Dorsolateral prefrontal cortex (tissue), 120 donors: ENCODE measurements at regions of chr19 and their contacts with region 1.

Region 1: GRCh38 chr19:29528350-29528945 is 2.7 kb downstream of the VSTM2B start:
- DNase-seq: peak; percentile 76 to 89 (median 84)
- H3K4me3 ChIP-seq: peak overlapping the region; percentile 18 to 78 (median 66)
- H3K27ac ChIP-seq: peak overlapping the region in 57 of 59 donors; percentile 25 to 97 (median 81)
- H3K27me3 ChIP-seq: peaks cover 0 to 61% (median 6%) of the 10 kb centered on the region in 45 donors
- CTCF ChIP-seq: peak; percentile 70 to 98 (median 91)

Region 2: GRCh38 chr19:28878862-28879566 is 649.4 kb before region 1 on chr19:
- intact Hi-C with region 1: loop called in 1 of 2 experiments (anchors 5 kb)
- DNase-seq: peak; percentile 60 to 87 (median 67)
- H3K4me3 ChIP-seq: no peak overlapping the region
- H3K27ac ChIP-seq: no peak overlapping the region
- H3K27me3 ChIP-seq: no peaks in the 10 kb centered on the region
- CTCF ChIP-seq: peak; percentile 64 to 97 (median 81)

Region 3: DNA sequence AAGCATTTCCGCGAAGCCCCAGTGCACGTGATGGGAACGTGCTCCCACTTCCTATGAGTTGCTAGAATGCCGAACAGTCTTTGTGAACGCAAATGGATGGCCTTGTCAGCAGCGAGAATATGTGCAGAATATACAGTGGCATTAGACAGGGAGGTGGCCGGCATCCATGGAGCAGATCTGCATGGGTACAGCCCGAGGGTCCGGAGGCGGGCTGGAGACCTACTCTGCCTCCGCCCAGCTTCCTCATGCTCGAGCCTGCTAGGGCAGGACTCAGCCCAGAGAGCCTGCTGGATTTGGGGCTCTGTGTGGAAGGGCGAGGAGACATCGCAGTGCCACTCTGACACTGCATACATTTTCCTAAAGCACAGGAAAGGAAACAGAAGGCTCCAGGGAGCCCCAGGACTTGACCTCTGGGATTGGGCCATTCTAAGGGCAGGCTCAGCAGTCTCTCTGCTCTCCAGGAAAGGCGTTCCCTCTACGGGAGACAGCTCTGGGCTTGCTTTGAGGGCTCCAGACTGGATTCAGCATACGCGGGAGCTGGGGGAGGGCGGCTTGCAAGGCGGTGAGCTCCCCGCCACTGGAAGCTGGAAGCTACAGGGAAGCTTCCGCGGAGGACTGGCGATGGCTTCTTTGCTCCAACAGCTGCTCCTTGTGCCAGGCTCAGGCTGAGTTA is 259.6 kb before region 1 on chr19:
- intact Hi-C with region 1: loop called in 1 of 2 experiments (anchors 5 kb)
- DNase-seq: peak in 1 of 10 donors; percentile 9
- H3K4me3 ChIP-seq: no peak overlapping the region
- H3K27ac ChIP-seq: no peak overlapping the region
- H3K27me3 ChIP-seq: peaks cover 0 to 12% (median 0%) of the 10 kb centered on the region in 45 donors
- CTCF ChIP-seq: no peak

Region 4: GRCh38 chr19:29467824-29468401 is 60.5 kb before region 1 on chr19:
- intact Hi-C with region 1: loop called (anchors 5 to 10 kb)
- DNase-seq: peak in 6 of 10 donors; percentile 41 to 82 (median 58)
- H3K4me3 ChIP-seq: peak overlapping the region in 1 of 59 donors; percentile 8
- H3K27ac ChIP-seq: peak overlapping the region in 6 of 59 donors; percentile 16 to 67 (median 18)
- H3K27me3 ChIP-seq: peaks cover 0 to 2% (median 0%) of the 10 kb centered on the region in 45 donors
- CTCF ChIP-seq: peak in 55 of 56 donors; percentile 22 to 90 (median 65)

Region 5: DNA sequence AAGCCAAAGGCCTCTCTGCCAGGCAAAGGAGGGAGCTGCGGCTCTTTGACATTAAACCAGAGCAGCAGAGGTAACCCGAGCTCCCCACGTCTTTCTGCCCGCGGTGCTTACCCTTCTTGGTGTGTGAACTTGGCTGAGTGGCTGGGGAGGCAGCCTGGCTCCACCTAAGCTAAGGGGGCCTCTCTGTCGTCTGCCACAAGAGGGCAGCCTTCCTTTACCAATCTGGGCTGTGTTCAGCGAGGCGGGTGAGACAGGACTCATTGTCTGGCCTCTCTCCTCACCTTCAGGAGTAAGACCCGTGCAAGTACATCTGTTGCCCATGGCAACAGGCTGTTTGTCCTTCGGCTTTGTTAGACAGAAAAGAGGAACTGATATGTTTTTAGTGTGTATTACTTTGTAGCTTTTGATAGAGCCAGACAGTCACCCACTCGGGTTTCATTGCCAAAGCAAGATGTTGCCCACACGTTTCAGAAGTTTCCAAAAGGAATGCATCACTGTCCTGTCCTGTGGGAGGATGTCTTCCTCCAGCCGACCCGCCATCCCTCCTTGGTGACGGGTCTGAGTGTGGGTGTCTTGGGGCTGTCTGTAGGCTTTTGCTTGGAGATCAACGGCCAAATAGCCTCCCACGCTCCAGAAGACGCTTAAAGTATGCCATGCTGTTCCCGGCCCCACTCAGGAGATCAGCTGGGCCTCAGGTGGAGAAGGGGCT is 82.3 kb after region 1 on chr19:
- intact Hi-C with region 1: loop called in 1 of 2 experiments (anchors 5 kb)
- DNase-seq: peak; percentile 68 to 88 (median 81)
- H3K4me3 ChIP-seq: peak overlapping the region in 3 of 59 donors; percentile 3 to 9 (median 5)
- H3K27ac ChIP-seq: peak overlapping the region in 16 of 59 donors; percentile 6 to 47 (median 26)
- H3K27me3 ChIP-seq: no peaks in the 10 kb centered on the region
- CTCF ChIP-seq: peak; percentile 60 to 96 (median 89)

Region 6: DNA sequence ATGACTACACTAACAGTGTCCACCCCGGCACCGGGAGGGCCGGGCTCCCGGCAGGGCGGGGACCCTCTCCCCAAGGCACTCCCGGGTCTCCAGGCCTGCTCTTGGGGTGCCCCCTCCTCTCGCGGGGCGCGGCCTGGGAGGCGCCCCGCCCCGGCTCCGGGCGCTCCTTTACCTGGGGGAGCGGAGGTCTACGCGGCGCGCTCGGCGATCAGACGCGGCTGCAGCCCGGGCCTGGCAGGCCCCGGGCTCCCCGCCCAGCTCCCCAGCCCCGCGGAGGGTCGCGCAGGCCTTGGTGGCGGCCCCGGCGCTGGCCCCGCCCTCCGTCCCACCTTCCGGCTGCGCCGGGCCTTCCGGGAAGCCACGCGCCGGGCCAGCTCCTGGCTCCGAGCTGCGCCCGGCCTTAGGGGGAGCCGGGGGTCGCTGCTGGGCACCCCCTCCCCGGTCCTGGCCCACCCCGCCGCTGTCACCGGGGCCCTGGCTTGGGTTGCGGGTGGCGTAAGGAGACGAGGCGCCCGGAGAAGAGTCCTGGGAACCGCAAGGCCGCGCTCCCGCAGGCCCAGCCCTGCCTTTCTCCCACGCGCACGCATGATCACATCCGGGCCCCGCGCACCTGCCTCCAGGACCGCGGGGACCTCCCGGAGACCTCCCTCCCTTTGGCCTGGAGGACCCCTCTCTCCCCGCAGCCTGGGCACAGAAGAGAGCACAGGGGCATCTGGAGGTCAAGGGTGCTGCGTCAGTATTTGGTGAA is 186.7 kb after region 1 on chr19 and contains the start of gene C19orf12:
- intact Hi-C with region 1: loop called in 1 of 2 experiments (anchors 10 kb)
- DNase-seq: peak in 8 of 10 donors; percentile 57 to 83 (median 60)
- H3K4me3 ChIP-seq: peak within 1 kb of the TSS; percentile 61 to 98 (median 89)
- H3K27ac ChIP-seq: peak within 1 kb of the TSS; percentile 66 to 97 (median 93)
- H3K27me3 ChIP-seq: no peaks in the 10 kb centered on the region
- CTCF ChIP-seq: peak in 22 of 56 donors; percentile 5 to 47 (median 24)
- total RNA-seq, gene C19orf12: 35.8 to 75.4 (median 58.2) TPM